Heart right ventricle (tissue), 16 donors: ENCODE measurements at regions of chrX and their contacts with region 1.

Region 1: GRCh38 chrX:155070975-155071693 is at the starts of genes BRCC3, CMC4 and MTCP1:
- DNase-seq: peak; percentile 70 to 84
- ATAC-seq: peak; percentile 93 to 98 (median 96)
- H3K4me3 ChIP-seq: peak within 1 kb of the TSS; percentile 47 to 79 (median 68)
- H3K27ac ChIP-seq: peak within 1 kb of the TSS; percentile 78 to 93 (median 90)
- H3K4me1 ChIP-seq: peaks cover 0 to 35% (median 13%) of the 10 kb centered on the region in 9 donors
- H3K27me3 ChIP-seq: no peaks in the 10 kb centered on the region
- CTCF ChIP-seq: no peak
- total RNA-seq, gene BRCC3: 13.9 to 20.3 (median 16.6) TPM
- total RNA-seq, gene CMC4: 16.6 to 25.8 (median 21.6) TPM
- total RNA-seq, gene MTCP1: 32.3 to 53.5 (median 48.8) TPM

Region 2: DNA sequence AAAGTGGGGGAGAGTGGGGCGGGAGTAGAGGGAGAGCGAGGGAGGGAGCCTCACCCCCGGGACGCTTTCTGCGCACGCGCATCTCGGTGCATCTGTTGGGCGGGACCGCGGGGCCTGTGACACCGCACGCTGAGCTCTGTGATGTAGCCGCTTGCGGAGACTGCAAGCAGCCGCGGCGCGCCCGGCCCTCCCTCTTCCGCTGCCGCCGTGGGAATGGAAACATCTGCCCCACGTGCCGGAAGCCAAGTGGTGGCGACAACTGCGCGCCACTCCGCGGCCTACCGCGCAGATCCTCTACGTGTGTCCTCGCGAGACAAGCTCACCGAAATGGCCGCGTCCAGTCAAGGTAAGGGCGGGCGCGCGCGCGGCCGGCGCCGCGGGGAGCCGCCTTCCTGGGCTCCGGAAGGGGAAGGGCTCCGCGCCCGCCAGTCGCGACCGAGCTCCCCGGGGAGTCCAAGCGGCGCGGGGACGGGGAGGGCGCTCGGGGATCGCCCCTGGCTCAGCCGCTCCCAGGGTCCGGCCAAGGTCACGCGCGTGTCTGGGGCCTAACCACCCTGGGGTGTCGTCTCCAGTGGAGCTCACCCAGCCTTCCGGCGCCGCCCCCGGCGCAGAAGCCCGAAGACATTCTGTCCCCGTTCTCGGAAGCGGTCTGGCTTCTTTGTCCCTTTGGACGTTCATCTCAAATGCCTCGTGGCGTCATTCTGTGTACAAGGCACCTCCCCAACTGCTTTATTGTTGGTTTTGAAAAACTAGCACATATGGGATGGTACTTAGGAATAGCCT is 44.2 kb before region 1 on chrX and contains the start of gene FUNDC2:
- intact Hi-C with region 1: loop called in 1 of 10 experiments (anchors 5 kb)
- DNase-seq: peak; percentile 92 to 94
- ATAC-seq: peak; percentile 91 to 97 (median 95)
- H3K4me3 ChIP-seq: peak within 1 kb of the TSS; percentile 32 to 75 (median 62)
- H3K27ac ChIP-seq: peak within 1 kb of the TSS; percentile 85 to 99 (median 98)
- H3K4me1 ChIP-seq: peaks cover 0 to 34% (median 4%) of the 10 kb centered on the region in 9 donors
- H3K27me3 ChIP-seq: no peaks in the 10 kb centered on the region
- CTCF ChIP-seq: no peak
- total RNA-seq, gene FUNDC2: 249 to 428 (median 312) TPM

Region 3: DNA sequence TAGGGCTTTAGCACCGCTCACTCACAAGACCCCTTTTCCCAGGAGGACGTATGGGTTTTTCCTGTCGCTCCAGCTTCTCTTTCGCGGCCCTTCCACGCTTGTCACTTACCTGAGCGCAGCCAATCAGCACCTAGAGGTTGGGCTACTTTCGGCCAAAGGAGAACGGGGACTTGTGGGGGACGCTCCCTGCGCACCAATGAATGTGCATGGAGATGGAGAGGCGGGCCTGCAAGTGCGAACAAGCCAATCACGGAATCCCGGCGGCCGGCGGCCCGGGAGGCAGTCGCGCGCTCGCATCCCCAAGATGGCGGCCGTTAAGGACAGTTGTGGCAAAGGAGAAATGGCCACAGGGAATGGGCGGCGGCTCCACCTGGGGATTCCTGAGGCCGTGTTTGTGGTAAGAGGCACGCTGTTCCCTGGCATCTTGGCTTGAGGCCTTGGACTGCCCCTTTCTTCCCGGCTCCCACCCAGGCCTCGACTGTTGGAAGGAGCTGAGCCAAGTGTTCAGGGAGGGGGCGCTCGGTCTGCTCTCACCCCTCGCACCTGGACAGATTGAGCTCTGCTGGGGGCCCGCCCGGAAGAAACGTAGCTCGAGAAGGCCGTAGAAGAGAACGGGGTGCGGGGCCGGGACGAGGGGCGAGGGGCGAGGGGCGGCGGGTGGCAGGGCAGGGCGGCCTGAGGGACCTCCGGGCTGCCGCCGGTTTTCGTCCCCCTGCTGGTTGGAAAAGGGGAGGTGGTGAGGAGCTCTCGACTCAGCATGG is 145.2 kb after region 1 on chrX and contains the start of gene VBP1:
- intact Hi-C with region 1: loop called in 1 of 10 experiments (anchors 10 kb)
- DNase-seq: peak; percentile 87 to 92
- ATAC-seq: peak; percentile 97 to 100 (median 99)
- H3K4me3 ChIP-seq: peak within 1 kb of the TSS; percentile 50 to 81 (median 75)
- H3K27ac ChIP-seq: peak within 1 kb of the TSS; percentile 72 to 93 (median 90)
- H3K4me1 ChIP-seq: peaks cover 0 to 27% (median 21%) of the 10 kb centered on the region in 9 donors
- H3K27me3 ChIP-seq: no peaks in the 10 kb centered on the region
- CTCF ChIP-seq: peak; percentile 16 to 64 (median 51)
- total RNA-seq, gene VBP1: 62.4 to 85.0 (median 73.0) TPM